Astrocyte of the cerebellum (primary cell): ENCODE measurements at regions of chr7 and their contacts with region 1.

Region 1: DNA sequence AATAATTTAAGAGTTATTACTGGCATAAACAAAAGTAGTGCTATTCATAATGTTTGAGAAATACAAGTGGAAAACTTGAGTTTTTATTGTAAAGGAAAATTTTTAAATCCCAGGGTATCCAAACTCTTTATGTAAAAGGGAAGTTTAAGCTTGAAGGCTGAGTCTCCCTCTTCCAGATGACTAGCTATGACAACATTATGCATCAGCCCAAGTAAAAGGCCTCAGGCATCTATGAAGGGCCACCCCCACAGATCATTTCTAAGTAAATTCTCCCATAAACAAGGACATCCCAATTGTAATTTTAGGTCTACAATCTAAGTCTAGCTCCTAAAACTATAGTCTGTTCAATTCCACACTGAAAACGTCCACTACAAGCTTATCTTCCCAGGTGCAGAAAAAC is 166.2 kb upstream of the STEAP1 start:
- DNase-seq: no peak
- H3K4me3 ChIP-seq: no peak overlapping the region
- CTCF ChIP-seq: no peak

Region 2: DNA sequence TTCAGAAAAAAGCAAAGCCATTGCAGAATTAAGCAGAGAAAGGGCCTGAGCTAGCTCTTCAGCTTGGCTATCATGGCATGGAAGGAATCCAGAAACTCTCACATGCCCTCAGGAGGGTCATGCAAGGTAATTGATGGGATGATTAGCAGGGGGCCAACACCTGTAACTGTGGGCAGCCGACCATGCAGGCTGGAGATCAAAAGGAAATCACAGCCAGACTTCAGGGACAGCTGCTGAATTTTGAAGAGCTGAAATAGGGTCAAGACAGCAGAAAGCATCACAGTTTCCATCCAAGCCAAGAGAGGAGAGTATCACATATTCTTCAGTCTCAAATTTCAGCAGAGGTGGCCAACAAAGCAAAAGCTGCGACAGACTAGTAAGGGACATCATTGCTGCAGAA is 73.4 kb before region 1 on chr7:
- in situ Hi-C with region 1: loop called (anchors 10 kb)
- DNase-seq: no peak
- H3K4me3 ChIP-seq: no peak overlapping the region
- CTCF ChIP-seq: no peak

Region 3: GRCh38 chr7:90033850-90034249 is 45.8 kb after region 1 on chr7:
- in situ Hi-C with region 1: loop called (anchors 5 kb)
- DNase-seq: no peak
- H3K4me3 ChIP-seq: no peak overlapping the region
- CTCF ChIP-seq: no peak